HEK293 (cell line): ENCODE measurements at regions of chr1 and their contacts with region 1.

Region 1: GRCh38 chr1:32247983-32248889 is 1.2 kb downstream of the FAM167B start:
- H3K4me3 ChIP-seq: no peak overlapping the region
- H3K27ac ChIP-seq: no peak overlapping the region
- H3K4me1 ChIP-seq: no peaks in the 10 kb centered on the region
- CTCF ChIP-seq: peak; percentile 97

Region 2: DNA sequence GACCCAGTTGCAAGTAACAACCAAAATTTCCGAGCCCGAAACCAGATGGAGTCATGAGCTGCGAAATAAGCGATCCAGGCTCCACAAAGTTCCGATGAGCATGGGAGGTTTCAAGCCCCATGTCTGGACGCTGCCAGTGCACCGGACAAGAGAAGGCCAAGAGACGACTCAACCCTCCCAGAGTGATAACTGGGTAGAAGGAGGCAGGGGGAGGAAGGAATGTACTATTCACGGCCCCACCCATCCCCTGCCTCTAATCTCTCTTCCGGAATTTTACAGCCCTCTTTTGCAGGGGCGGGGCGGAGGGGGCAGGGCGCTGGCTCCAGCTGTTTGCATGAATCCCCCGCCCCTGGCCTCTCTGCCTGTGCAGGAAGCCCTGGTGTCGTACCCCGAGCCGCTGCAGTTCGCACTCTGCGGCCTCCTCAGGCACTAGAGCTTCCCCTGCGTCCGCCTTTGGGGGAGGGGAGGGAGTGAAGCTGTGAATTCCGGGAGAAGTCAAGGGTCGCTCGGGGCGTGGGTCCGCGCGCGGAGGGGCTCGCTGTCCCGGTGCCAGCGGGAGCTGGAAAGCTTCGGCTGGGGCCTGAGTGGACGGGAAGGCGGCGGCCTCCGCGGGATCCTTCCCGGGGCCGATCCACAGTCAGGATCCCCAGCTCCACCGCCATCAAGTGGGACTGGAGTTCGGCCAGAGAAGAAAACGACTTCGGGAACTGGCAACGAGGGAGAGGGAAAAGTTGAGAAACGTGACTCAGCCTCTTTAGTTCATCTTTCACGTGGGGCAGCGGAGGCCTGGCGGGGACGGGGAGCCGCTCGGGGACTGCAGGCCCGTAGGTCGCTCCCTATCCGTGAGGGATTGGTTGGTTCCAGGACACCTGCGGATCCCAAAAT is 303.8 kb before region 1 on chr1:
- CTCF ChIA-PET with region 1: no interaction called
- POLR2A ChIA-PET with region 1: no interaction called
- H3K4me3 ChIP-seq: peak overlapping the region; percentile 44
- H3K27ac ChIP-seq: peak overlapping the region; percentile 76
- H3K4me1 ChIP-seq: peaks cover 1% of the 10 kb centered on the region; the same call in 1 of the 2 replicates
- CTCF ChIP-seq: no peak

Region 3: GRCh38 chr1:32215629-32216480 is 32.4 kb before region 1 on chr1:
- CTCF ChIA-PET with region 1: interaction called, 27 read pairs
- POLR2A ChIA-PET with region 1: interaction called, 3 read pairs
- H3K4me3 ChIP-seq: no peak overlapping the region
- H3K27ac ChIP-seq: no peak overlapping the region
- H3K4me1 ChIP-seq: 0 out of 2 replicates have a peak, but pooled peaks cover 2% of the 10 kb centered on the region
- CTCF ChIP-seq: peak; percentile 72

Region 4: GRCh38 chr1:32221980-32222755 is 26.1 kb before region 1 on chr1 and contains the starts of genes EIF3I and TMEM234:
- CTCF ChIA-PET with region 1: interaction called, 27 read pairs
- POLR2A ChIA-PET with region 1: interaction called, 5 read pairs
- H3K4me3 ChIP-seq: peak within 1 kb of the TSS; percentile 83
- H3K27ac ChIP-seq: peak within 1 kb of the TSS; percentile 53
- H3K4me1 ChIP-seq: peaks cover 2% of the 10 kb centered on the region; the same call in 1 of the 2 replicates
- CTCF ChIP-seq: no peak

Region 5: GRCh38 chr1:32275424-32275823 is 27.2 kb after region 1 on chr1:
- CTCF ChIA-PET with region 1: interaction called, 10 read pairs
- POLR2A ChIA-PET with region 1: no interaction called
- H3K4me3 ChIP-seq: no peak overlapping the region
- H3K27ac ChIP-seq: no peak overlapping the region
- H3K4me1 ChIP-seq: no peaks in the 10 kb centered on the region; the same call in 1 of the 2 replicates
- CTCF ChIP-seq: no peak

Region 6: GRCh38 chr1:32351399-32352238 is 103.4 kb after region 1 on chr1:
- CTCF ChIA-PET with region 1: no interaction called
- POLR2A ChIA-PET with region 1: no interaction called
- H3K4me3 ChIP-seq: peak overlapping the region; percentile 75
- H3K27ac ChIP-seq: peak overlapping the region; percentile 95
- H3K4me1 ChIP-seq: peaks cover 7% of the 10 kb centered on the region; the same call in 1 of the 2 replicates
- CTCF ChIP-seq: peak; percentile 64